ENCODE measurements at regions of chr1 and their contacts with region 1.

Region 1: GRCh38 chr1:51878616-51879336 is at the start of gene NRDC:
- DNase-seq: peak; percentile 98 to 100
- ATAC-seq: peak; percentile 97 to 99 (median 97)
- H3K4me3 ChIP-seq: peak within 1 kb of the TSS; percentile 70 to 98 (median 82)
- H3K27ac ChIP-seq: peak within 1 kb of the TSS; percentile 91 to 99 (median 96)
- H3K4me1 ChIP-seq: peaks cover 3 to 47% (median 39%) of the 10 kb centered on the region in 9 donors
- H3K27me3 ChIP-seq: peaks cover 0 to 20% (median 14%) of the 10 kb centered on the region in 7 donors
- CTCF ChIP-seq: peak in 1 of 9 donors; percentile 6
- total RNA-seq, gene NRDC: 115 to 163 (median 135) TPM

Region 2: DNA sequence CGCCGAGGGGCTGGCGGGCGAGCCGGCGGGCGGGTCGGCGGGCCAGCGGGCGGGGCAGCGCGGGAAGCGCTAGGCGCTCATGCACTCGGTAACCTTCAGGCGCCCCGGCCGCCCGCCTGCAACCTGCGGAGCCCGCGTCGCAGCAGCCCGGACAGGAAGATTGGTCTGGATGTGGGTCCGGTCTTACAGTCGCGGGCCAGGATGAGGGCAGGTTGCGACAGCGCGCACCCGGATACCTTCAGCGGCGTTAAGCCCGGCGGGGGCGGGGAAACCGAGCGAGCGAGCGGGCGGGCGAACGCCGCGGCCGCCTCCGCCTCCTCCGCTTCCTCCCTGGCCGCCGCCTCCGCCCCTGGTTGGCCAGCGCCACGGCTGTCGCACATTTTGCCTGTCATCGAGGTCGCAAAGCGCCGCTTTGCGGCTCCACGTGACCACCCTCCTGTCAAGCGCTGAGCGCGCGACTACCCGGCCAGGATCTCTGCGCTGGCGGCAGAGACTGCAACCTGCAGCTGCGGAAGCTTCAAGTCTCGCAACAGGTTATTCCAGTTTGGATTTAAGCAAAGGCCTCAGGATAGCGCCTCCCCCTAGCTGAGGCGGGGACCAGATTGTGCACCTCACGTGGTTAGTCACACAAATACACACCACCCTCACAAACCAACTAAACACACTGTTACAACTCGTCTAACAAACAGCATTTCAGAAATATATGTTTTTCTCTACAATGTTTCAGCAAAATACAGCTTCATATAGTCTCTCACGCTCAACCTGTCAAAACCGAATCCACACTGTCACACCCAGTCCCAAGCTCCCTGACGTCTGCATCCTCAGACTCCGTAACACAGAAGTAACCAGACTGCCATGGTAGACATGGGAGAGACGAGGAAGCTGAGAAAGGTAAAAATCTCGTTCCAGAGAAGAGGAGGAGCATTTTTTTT is 918.6 kb before region 1 on chr1 and contains the start of gene FAF1:
- intact Hi-C with region 1: loop called in 1 of 10 experiments (anchors 5 kb)
- DNase-seq: peak; percentile 96 to 97
- ATAC-seq: peak; percentile 98 to 100 (median 100)
- H3K4me3 ChIP-seq: peak within 1 kb of the TSS; percentile 22 to 80 (median 75)
- H3K27ac ChIP-seq: peak within 1 kb of the TSS; percentile 66 to 92 (median 88)
- H3K4me1 ChIP-seq: peaks cover 5 to 35% (median 23%) of the 10 kb centered on the region in 9 donors
- H3K27me3 ChIP-seq: no peaks in the 10 kb centered on the region
- CTCF ChIP-seq: peak in 6 of 9 donors; percentile 12 to 43 (median 24)
- total RNA-seq, gene FAF1: 81.4 to 102 (median 90.8) TPM

Region 3: GRCh38 chr1:51969038-51969705 is 90.4 kb after region 1 on chr1:
- intact Hi-C with region 1: no loop called
- DNase-seq: no peak
- ATAC-seq: no peak
- H3K4me3 ChIP-seq: no peak overlapping the region
- H3K27ac ChIP-seq: no peak overlapping the region
- H3K4me1 ChIP-seq: no peaks in the 10 kb centered on the region
- H3K27me3 ChIP-seq: peaks cover 0 to 36% (median 19%) of the 10 kb centered on the region in 7 donors
- CTCF ChIP-seq: no peak

Region 4: GRCh38 chr1:52056163-52056936 is 177.6 kb after region 1 on chr1 and contains the start of gene BTF3L4:
- intact Hi-C with region 1: loop called in 1 of 10 experiments (anchors 5 kb)
- DNase-seq: peak; percentile 93 to 96
- ATAC-seq: peak; percentile 97 to 99 (median 98)
- H3K4me3 ChIP-seq: peak within 1 kb of the TSS; percentile 73 to 99 (median 90)
- H3K27ac ChIP-seq: peak within 1 kb of the TSS; percentile 73 to 97 (median 90)
- H3K4me1 ChIP-seq: peaks cover 2 to 53% (median 37%) of the 10 kb centered on the region in 9 donors
- H3K27me3 ChIP-seq: no peaks in the 10 kb centered on the region
- CTCF ChIP-seq: peak in 2 of 9 donors; percentile 1 to 12
- total RNA-seq, gene BTF3L4: 27.7 to 37.1 (median 30.2) TPM